ENCODE measurements at regions of chr12 and their contacts with region 1.

Region 1: DNA sequence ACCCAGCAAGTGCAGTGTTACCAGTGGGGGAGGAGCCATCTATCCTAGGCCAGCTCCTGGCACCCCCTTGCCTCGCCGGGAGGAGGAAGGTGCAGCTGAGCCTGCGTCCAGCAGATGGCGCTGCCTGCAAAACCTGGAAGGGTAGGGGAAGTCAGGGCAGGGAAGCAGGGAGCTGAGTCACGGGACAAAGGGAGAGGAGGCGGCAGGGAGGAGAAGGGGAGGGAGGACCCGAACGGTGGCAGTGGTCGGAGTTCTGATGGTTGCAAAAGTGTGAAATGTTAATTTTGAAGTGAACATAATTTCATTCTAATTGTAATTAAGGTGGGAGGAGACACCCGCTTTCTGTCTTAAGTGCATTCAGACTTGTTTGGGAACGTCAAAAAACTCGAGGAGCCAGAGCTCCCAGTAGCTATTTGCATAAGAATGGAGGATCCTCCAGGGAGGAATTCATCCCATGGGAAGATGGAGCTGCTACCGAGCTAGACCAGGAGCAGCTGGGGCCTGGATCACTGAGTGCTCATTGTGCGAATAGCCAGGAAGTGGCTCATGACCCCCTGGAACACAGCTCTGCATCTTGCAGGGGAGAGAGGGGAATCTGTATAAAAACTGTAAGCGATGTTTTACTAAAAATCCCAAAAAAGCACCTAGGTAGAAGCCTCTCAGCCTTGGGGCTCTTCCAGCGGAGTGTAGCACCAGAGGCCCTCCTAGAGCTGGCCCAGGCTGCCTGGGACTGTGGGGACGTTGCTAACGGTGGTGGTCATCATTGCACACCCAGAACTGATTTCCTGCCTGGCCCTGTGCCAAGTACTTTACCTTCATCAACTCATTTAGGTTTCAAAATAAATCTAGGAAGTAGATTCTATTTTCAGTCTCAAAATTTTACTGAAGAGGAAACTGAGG is 59.5 kb downstream of the EMP1 start:
- DNase-seq: peak; percentile 96 to 99
- H3K4me3 ChIP-seq: peak overlapping the region; percentile 37
- H3K4me3 Mint-ChIP-seq: peak overlapping the region; percentile 88
- H3K27ac Mint-ChIP-seq: peak overlapping the region; percentile 90
- H3K4me1 ChIP-seq: peaks cover 23% of the 10 kb centered on the region
- H3K4me1 Mint-ChIP-seq: peaks cover 24% of the 10 kb centered on the region
- H3K27me3 ChIP-seq: no peaks in the 10 kb centered on the region
- H3K27me3 Mint-ChIP-seq: no peaks in the 10 kb centered on the region
- CTCF ChIP-seq: peak; percentile 98 to 100

Region 2: GRCh38 chr12:13278249-13278787 is 22.3 kb after region 1 on chr12:
- CTCF ChIA-PET with region 1: interaction called, 22 read pairs
- POLR2A ChIA-PET with region 1: no interaction called
- intact Hi-C with region 1: no loop called
- DNase-seq: peak in 1 of 2 experiments; percentile 67
- H3K4me3 ChIP-seq: no peak overlapping the region
- H3K4me3 Mint-ChIP-seq: no peak overlapping the region
- H3K27ac Mint-ChIP-seq: no peak overlapping the region
- H3K4me1 ChIP-seq: peaks cover 5% of the 10 kb centered on the region
- H3K4me1 Mint-ChIP-seq: peaks cover 14% of the 10 kb centered on the region
- H3K27me3 ChIP-seq: no peaks in the 10 kb centered on the region
- H3K27me3 Mint-ChIP-seq: peaks cover 4% of the 10 kb centered on the region
- CTCF ChIP-seq: peak; percentile 83 to 96

Region 3: GRCh38 chr12:13390381-13390861 is 134.4 kb after region 1 on chr12:
- CTCF ChIA-PET with region 1: no interaction called
- POLR2A ChIA-PET with region 1: no interaction called
- intact Hi-C with region 1: no loop called
- DNase-seq: no peak
- H3K4me3 ChIP-seq: no peak overlapping the region
- H3K4me3 Mint-ChIP-seq: no peak overlapping the region
- H3K27ac Mint-ChIP-seq: no peak overlapping the region
- H3K4me1 ChIP-seq: no peaks in the 10 kb centered on the region
- H3K4me1 Mint-ChIP-seq: no peaks in the 10 kb centered on the region
- H3K27me3 ChIP-seq: no peaks in the 10 kb centered on the region
- H3K27me3 Mint-ChIP-seq: no peaks in the 10 kb centered on the region
- CTCF ChIP-seq: no peak

Region 4: GRCh38 chr12:13452955-13453570 is 197.0 kb after region 1 on chr12:
- CTCF ChIA-PET with region 1: interaction called, 3 read pairs
- POLR2A ChIA-PET with region 1: no interaction called
- intact Hi-C with region 1: loop called (anchors 10 kb)
- DNase-seq: no peak
- H3K4me3 ChIP-seq: no peak overlapping the region
- H3K4me3 Mint-ChIP-seq: no peak overlapping the region
- H3K27ac Mint-ChIP-seq: no peak overlapping the region
- H3K4me1 ChIP-seq: no peaks in the 10 kb centered on the region
- H3K4me1 Mint-ChIP-seq: no peaks in the 10 kb centered on the region
- H3K27me3 ChIP-seq: no peaks in the 10 kb centered on the region
- H3K27me3 Mint-ChIP-seq: peaks cover 3% of the 10 kb centered on the region
- CTCF ChIP-seq: peak in 1 of 2 experiments; percentile 15

Region 5: DNA sequence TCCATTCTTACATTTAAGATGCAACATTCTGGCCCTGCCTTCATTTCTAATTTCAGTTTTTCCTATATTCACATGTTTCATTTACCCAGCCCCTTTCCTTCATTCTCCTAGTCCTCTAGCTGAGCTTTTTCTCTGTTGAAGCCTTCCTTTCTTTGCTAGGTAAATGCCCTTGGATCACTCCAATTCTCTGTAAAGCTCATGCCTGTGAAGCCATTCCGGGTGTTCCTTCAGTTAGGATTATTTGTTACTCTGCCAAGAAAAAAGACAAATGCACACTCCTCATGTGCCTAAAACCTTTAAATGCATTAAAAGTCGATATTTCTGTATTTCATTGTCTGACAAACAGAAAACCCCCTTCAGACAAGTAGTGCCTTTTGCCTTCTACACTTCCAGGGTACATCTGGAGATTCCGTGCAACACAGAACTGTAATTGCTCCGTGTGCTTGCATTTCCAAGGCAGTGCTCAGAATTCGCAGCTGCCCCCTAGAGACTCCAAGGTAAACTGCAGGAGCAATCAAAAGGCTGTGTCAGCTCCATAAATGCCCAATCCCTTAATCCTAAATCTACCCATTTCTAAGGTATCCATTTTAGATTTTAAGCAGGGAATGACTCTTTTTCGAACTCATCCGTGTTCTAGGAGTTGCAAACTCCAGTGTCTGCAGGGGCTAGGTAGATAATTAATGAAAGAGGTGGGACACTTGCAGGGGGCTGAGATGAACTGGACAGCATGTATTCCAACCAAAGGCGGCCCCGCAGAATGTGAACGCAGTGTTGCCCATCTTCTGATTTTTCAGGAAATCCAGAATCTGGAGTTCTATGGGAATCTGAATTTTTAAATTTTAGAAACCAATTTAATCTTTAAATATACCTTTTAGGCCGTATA is 405.2 kb after region 1 on chr12:
- CTCF ChIA-PET with region 1: interaction called, 13 read pairs
- POLR2A ChIA-PET with region 1: no interaction called
- intact Hi-C with region 1: loop called (anchors 1 kb)
- DNase-seq: peak; percentile 60 to 67
- H3K4me3 ChIP-seq: no peak overlapping the region
- H3K4me3 Mint-ChIP-seq: no peak overlapping the region
- H3K27ac Mint-ChIP-seq: no peak overlapping the region
- H3K4me1 ChIP-seq: no peaks in the 10 kb centered on the region
- H3K4me1 Mint-ChIP-seq: no peaks in the 10 kb centered on the region
- H3K27me3 ChIP-seq: no peaks in the 10 kb centered on the region
- H3K27me3 Mint-ChIP-seq: no peaks in the 10 kb centered on the region
- CTCF ChIP-seq: peak; percentile 94 to 97

Region 6: GRCh38 chr12:13981990-13982389 is 725.9 kb after region 1 on chr12:
- CTCF ChIA-PET with region 1: interaction called, 10 read pairs
- POLR2A ChIA-PET with region 1: interaction called, 4 read pairs
- intact Hi-C with region 1: loop called (anchors 5 kb)
- DNase-seq: peak; percentile 79 to 92
- H3K4me3 ChIP-seq: peak overlapping the region; percentile 91
- H3K4me3 Mint-ChIP-seq: peak overlapping the region; percentile 98
- H3K27ac Mint-ChIP-seq: no peak overlapping the region
- H3K4me1 ChIP-seq: no peaks in the 10 kb centered on the region
- H3K4me1 Mint-ChIP-seq: peaks cover 11% of the 10 kb centered on the region
- H3K27me3 ChIP-seq: no peaks in the 10 kb centered on the region
- H3K27me3 Mint-ChIP-seq: no peaks in the 10 kb centered on the region
- CTCF ChIP-seq: peak; percentile 98

Measured in Caco-2 (cell line).